ENCODE measurements at regions of chr19 and their contacts with region 1.

Region 1: DNA sequence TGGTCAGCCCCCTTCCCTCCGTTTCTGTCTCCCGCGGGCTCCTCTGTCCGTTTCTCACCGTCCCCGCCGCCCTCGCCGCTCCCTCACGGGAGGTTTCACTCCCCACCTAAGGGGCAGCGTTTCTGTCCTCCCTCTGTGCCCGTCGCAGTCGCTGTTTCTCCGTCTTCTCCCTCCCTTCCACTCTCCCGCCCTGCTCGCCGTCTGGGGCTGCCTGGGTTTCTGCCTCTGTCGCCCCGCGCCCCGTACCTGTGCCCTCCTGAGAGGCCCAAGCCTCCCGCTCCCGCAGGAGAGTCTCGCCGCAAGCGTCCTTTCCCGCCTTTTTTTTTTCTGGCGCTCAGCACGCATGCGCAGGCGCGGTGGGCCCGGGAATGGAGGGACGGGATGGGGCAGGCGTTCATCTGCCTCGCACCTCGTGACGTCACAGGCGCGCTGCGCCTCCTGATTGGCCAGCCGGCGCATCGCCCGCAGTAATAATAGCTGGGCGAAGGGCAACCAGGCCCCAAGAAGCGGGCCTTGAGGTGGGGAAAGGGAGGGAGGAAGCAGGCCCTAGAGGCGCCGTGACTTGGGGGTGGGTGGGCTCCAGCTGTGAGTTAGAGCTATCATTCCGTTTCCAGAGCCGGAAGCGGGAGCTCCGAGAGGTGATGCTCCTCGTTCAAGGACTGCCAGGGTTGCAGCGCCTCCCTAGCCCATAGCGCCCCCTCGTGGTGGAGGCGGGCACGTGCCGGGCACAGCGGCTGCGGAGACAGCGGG is 15.4 kb downstream of the SSC5D start:
- DNase-seq: peak; percentile 92
- H3K4me3 Mint-ChIP-seq: peak overlapping the region; percentile 69
- H3K27ac Mint-ChIP-seq: no peak overlapping the region
- H3K4me1 Mint-ChIP-seq: no peaks in the 10 kb centered on the region
- H3K27me3 Mint-ChIP-seq: no peaks in the 10 kb centered on the region
- CTCF ChIP-seq: peak; percentile 98

Region 2: GRCh38 chr19:55289117-55289796 is 214.4 kb before region 1 on chr19:
- CTCF ChIA-PET with region 1: interaction called, 14 read pairs
- POLR2A ChIA-PET with region 1: interaction called, 4 read pairs
- intact Hi-C with region 1: no loop called
- DNase-seq: no peak
- H3K4me3 Mint-ChIP-seq: no peak overlapping the region
- H3K27ac Mint-ChIP-seq: no peak overlapping the region
- H3K4me1 Mint-ChIP-seq: peaks cover 5% of the 10 kb centered on the region
- H3K27me3 Mint-ChIP-seq: no peaks in the 10 kb centered on the region
- CTCF ChIP-seq: no peak

Region 3: DNA sequence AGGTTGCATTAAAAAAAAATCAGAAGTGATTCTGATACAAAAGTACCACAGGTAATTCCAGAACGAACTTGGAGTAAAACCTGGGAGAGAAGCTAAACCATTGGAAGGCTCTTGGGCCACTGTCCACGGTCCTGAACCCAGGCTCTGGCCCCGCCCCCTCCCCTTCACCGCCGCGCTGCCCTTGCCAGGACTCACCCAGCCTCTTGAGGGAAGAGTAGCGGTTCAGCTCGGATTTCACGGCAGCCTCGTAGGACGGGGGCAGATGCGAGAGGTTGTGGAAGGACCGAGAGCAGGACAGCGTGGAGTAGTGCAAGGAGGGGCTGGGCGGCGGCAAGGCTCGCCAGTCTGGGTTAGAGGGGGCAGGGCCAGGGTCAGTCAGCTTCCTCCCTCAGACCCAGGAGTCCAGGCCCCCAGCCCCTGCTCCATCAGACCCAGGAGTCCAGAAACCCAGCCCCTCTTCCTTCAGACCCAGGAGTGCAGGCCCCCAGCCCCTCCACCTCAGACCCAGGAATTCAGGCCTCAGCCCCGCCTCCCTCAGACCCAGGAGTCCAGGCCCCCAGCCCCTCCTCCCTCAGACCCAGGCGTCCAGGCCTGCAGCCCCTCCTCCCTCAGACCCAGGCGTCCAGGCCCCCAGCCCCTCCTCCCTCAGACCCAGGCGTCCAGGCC is 66.1 kb before region 1 on chr19:
- CTCF ChIA-PET with region 1: no interaction called
- POLR2A ChIA-PET with region 1: no interaction called
- intact Hi-C with region 1: no loop called
- DNase-seq: peak; percentile 82
- H3K4me3 Mint-ChIP-seq: no peak overlapping the region
- H3K27ac Mint-ChIP-seq: no peak overlapping the region
- H3K4me1 Mint-ChIP-seq: peaks cover 16% of the 10 kb centered on the region
- H3K27me3 Mint-ChIP-seq: peaks cover 39% of the 10 kb centered on the region
- CTCF ChIP-seq: no peak

Region 4: GRCh38 chr19:55461259-55461973 is 42.3 kb before region 1 on chr19 and contains the start of gene ISOC2:
- CTCF ChIA-PET with region 1: interaction called, 64 read pairs
- POLR2A ChIA-PET with region 1: interaction called, 8 read pairs
- intact Hi-C with region 1: no loop called
- DNase-seq: peak; percentile 100
- H3K4me3 Mint-ChIP-seq: peak within 1 kb of the TSS; percentile 97
- H3K27ac Mint-ChIP-seq: peak within 1 kb of the TSS; percentile 83
- H3K4me1 Mint-ChIP-seq: peaks cover 17% of the 10 kb centered on the region
- H3K27me3 Mint-ChIP-seq: no peaks in the 10 kb centered on the region
- CTCF ChIP-seq: no peak
- total RNA-seq, gene ISOC2: 34.3 and 59.9 TPM in 2 replicates

Region 5: GRCh38 chr19:55476100-55476775 is 27.4 kb before region 1 on chr19 and contains the start of gene ZNF628:
- CTCF ChIA-PET with region 1: interaction called, 18 read pairs
- POLR2A ChIA-PET with region 1: interaction called, 11 read pairs
- intact Hi-C with region 1: no loop called
- DNase-seq: peak; percentile 99
- H3K4me3 Mint-ChIP-seq: peak within 1 kb of the TSS; percentile 89
- H3K27ac Mint-ChIP-seq: peak within 1 kb of the TSS; percentile 91
- H3K4me1 Mint-ChIP-seq: peaks cover 33% of the 10 kb centered on the region
- H3K27me3 Mint-ChIP-seq: no peaks in the 10 kb centered on the region
- CTCF ChIP-seq: no peak
- total RNA-seq, gene ZNF628: 6.2 and 12.1 TPM in 2 replicates

Region 6: GRCh38 chr19:55516878-55517620 is 13.4 kb after region 1 on chr19:
- CTCF ChIA-PET with region 1: interaction called, 14 read pairs
- POLR2A ChIA-PET with region 1: interaction called, 6 read pairs
- intact Hi-C with region 1: no loop called
- DNase-seq: peak; percentile 94
- H3K4me3 Mint-ChIP-seq: peak overlapping the region; percentile 73
- H3K27ac Mint-ChIP-seq: peak overlapping the region; percentile 74
- H3K4me1 Mint-ChIP-seq: peaks cover 5% of the 10 kb centered on the region
- H3K27me3 Mint-ChIP-seq: peaks cover 11% of the 10 kb centered on the region
- CTCF ChIP-seq: peak; percentile 79

Region 7: GRCh38 chr19:55624109-55625003 is 120.7 kb after region 1 on chr19 and contains the start of gene ZNF784:
- CTCF ChIA-PET with region 1: interaction called, 12 read pairs
- POLR2A ChIA-PET with region 1: no interaction called
- intact Hi-C with region 1: no loop called
- DNase-seq: peak; percentile 93
- H3K4me3 Mint-ChIP-seq: peak within 1 kb of the TSS; percentile 91
- H3K27ac Mint-ChIP-seq: peak within 1 kb of the TSS; percentile 99
- H3K4me1 Mint-ChIP-seq: peaks cover 10% of the 10 kb centered on the region
- H3K27me3 Mint-ChIP-seq: no peaks in the 10 kb centered on the region
- CTCF ChIP-seq: no peak
- total RNA-seq, gene ZNF784: 2.7 and 3.1 TPM in 2 replicates

Measured in MCF 10A (cell line).